Activated naive CD4-positive, alpha-beta T cell treated with anti-CD3 and anti-CD28 coated beads for 36 hours (primary cell): ENCODE measurements at regions of chr9 and their contacts with region 1.

Region 1: GRCh38 chr9:124658165-124659017 is 112.7 kb downstream of the NR6A1 start:
- DNase-seq: peak; percentile 75
- H3K4me3 Mint-ChIP-seq: peak overlapping the region; percentile 95
- H3K27ac Mint-ChIP-seq: peak overlapping the region; percentile 89
- H3K4me1 Mint-ChIP-seq: peaks cover 11% of the 10 kb centered on the region
- H3K27me3 Mint-ChIP-seq: no peaks in the 10 kb centered on the region

Region 2: DNA sequence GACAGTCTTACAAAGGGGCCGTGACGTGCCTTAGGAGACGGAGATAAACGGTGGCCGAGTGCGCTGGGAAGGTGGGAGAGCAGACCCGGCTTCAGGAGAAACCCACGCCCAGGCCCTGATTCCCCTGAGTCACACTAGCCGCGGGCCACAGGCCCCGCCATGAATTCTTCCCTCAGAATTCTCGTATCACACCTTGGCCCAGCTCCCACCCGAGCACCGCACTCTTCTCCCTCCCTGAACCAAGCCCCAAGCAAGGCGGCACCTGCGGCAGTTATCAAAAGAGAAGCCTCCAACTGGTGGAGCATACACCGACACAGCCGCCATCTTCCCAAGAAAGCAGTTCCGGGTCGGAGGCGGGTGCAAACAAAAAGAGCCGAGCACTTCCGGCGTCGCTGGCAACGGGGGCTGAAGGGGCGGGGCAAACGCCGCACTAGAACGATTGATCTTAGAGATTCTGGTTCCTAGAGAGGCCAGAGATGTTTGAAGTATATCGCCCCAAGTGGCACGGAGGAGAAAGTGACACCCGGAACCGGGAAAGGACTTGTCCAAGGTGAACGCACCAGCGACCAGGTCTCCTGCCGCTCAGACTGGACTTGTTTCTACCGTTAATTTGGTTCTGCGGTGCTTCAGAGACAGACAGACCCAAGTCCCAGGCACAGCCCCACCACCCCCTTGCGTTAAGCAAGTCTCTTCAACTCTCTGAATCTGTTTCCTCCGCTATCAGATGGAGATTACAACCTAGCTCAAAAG is 243.1 kb before region 1 on chr9 and contains the start of gene PSMB7:
- CTCF ChIA-PET with region 1: no interaction called
- intact Hi-C with region 1: loop called (anchors 2 kb)
- DNase-seq: peak; percentile 99
- H3K4me3 Mint-ChIP-seq: peak within 1 kb of the TSS; percentile 95
- H3K27ac Mint-ChIP-seq: peak within 1 kb of the TSS; percentile 83
- H3K4me1 Mint-ChIP-seq: peaks cover 38% of the 10 kb centered on the region
- H3K27me3 Mint-ChIP-seq: no peaks in the 10 kb centered on the region
- total RNA-seq, gene PSMB7: 161 to 167 TPM

Region 3: DNA sequence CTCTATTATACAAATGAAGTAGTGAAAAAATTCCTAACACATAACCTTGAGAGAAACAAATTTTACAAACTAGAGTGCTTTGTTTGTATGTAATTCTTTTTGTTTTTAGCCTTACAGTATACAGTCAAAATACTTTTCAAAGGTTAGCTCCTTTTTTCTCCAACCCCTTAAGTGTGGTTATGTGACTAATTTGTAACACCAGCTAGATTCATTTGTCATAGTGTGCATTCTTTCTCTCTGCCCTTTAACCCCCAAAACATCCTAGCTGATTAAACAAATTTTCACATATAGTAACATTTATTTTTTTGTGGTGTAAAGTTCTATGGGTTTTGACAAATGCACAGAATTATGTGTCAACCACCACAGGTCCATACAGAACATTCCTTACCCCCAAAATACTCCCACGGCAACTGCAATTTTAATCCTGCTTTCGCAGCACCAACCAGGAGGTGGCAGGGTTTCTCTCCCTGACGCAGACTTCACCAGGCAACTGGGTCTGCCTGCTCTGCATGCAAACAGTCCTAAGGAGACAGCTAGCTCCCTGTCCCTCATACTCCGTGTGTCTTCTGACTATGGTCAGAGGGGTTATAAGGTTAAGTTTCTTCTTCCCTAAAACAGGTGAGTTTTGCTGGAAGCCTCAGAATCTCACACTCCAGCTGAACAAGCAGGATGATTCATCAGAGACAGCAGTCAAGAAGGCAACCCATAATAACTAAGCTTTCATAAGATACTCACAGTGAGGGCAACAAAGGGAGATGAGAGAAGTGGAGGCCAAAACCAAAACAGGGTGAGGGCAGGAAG is 106.7 kb before region 1 on chr9:
- CTCF ChIA-PET with region 1: interaction called, 3 read pairs
- intact Hi-C with region 1: loop called (anchors 1 kb)
- DNase-seq: peak; percentile 62
- H3K4me3 Mint-ChIP-seq: no peak overlapping the region
- H3K27ac Mint-ChIP-seq: no peak overlapping the region
- H3K4me1 Mint-ChIP-seq: peaks cover 18% of the 10 kb centered on the region
- H3K27me3 Mint-ChIP-seq: no peaks in the 10 kb centered on the region

Region 4: GRCh38 chr9:124635285-124635684 is 23.1 kb before region 1 on chr9:
- CTCF ChIA-PET with region 1: interaction called, 4 read pairs
- intact Hi-C with region 1: loop called (anchors 2 kb)
- DNase-seq: peak; percentile 53
- H3K4me3 Mint-ChIP-seq: no peak overlapping the region
- H3K27ac Mint-ChIP-seq: no peak overlapping the region
- H3K4me1 Mint-ChIP-seq: peaks cover 10% of the 10 kb centered on the region
- H3K27me3 Mint-ChIP-seq: peaks cover 13% of the 10 kb centered on the region